ENCODE measurements at regions of chr17 and their contacts with region 1.

Region 1: DNA sequence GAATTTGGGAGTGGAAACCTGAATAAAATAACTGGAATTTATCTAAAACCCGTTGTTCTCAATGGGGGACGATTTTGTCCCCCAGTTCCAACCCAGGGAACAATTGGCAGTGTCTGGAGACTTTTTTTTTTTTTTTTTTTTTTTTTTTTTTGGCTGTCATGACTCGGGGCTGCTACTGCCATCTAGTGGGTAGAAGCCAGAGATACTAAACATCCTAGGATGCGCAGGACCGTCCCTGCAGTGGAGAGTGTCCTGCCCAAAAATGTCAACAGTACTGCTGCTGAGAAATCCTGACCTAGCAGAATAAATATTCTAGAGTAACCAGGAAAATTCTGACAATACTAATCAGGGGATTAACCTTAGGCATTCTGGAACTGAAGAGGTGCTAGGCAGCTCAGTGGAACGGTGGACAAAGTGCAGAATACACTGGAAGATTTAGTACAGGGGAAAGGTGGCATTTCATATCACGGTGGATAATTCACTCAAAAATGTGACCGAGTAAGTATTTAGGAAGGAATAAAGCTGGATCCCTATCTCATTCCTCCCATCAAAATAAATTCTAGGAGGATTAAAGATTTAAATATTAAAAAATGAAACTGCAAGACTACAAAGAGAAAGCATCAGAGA is 107.6 kb downstream of the SPECC1 start:
- DNase-seq: no peak
- ATAC-seq: peak; percentile 74

Region 2: DNA sequence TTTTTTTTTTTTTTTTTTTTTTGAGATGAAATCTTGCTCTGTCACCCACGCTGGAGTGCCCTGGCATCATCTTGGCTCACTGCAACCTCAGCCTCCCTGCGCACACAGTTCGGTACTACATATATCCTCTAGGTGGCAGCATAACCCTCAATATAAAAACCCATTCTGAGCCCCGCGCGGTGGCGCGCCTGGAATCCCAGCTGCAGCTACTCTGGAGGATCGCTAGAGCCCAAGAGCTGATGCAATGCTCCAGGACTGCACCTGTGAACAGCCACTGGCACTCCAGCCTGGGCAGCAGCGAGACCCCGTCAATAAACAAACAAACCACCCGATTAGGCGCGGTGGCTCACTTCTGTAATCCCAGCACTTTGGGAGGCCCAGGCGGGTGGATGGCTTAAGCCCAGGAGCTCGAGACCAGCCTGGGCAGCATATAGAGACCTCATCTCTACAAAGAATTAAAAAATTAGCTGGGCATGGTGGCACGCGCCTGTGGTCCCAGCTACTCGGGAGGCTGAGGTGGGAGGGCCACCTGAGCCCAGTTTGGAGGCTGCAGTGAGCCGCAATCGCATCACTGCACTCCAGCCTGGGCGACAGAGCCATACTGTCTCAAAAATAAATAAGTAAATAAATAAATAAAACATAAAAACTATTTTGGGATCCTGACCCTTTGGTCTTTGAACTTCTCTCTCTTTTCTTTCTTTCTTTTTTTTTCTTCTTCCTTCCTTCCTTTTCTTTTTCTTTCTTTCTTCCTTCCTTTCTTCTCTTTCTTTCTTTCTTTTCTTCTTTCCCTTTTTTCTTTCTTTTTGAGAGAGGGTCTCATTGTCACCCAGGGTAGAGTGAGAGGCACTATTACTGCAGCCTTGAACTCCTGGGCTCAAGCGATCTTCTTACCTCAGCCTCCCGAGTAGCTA is 123.7 kb before region 1 on chr17:
- intact Hi-C with region 1: loop called (anchors 5 kb)
- DNase-seq: peak; percentile 93
- ATAC-seq: peak; percentile 99